ENCODE measurements at regions of chr7 and their contacts with region 1.

Region 1: GRCh38 chr7:99143853-99144672 is at the start of gene SMURF1:
- DNase-seq: peak in 1 of 2 donors; percentile 79
- H3K4me3 ChIP-seq: peak within 1 kb of the TSS; percentile 97 to 100
- H3K27ac ChIP-seq: peak within 1 kb of the TSS; percentile 99 to 100
- H3K4me1 ChIP-seq: peaks cover 3 to 11% of the 10 kb centered on the region in 2 donors
- H3K27me3 ChIP-seq: no peaks in the 10 kb centered on the region
- CTCF ChIP-seq: peak in 1 of 3 experiments; percentile 35
- total RNA-seq, gene SMURF1: 26.5 TPM

Region 2: GRCh38 chr7:99040104-99040958 is 103.7 kb before region 1 on chr7:
- intact Hi-C with region 1: loop called (anchors 1 kb)
- DNase-seq: peak; percentile 46 to 92
- H3K4me3 ChIP-seq: peak overlapping the region in 1 of 2 donors; percentile 25
- H3K27ac ChIP-seq: peak overlapping the region; percentile 79 to 87
- H3K4me1 ChIP-seq: peaks cover 3 to 31% of the 10 kb centered on the region in 2 donors
- H3K27me3 ChIP-seq: no peaks in the 10 kb centered on the region
- CTCF ChIP-seq: peak; percentile 68 to 85 (median 70)

Region 3: DNA sequence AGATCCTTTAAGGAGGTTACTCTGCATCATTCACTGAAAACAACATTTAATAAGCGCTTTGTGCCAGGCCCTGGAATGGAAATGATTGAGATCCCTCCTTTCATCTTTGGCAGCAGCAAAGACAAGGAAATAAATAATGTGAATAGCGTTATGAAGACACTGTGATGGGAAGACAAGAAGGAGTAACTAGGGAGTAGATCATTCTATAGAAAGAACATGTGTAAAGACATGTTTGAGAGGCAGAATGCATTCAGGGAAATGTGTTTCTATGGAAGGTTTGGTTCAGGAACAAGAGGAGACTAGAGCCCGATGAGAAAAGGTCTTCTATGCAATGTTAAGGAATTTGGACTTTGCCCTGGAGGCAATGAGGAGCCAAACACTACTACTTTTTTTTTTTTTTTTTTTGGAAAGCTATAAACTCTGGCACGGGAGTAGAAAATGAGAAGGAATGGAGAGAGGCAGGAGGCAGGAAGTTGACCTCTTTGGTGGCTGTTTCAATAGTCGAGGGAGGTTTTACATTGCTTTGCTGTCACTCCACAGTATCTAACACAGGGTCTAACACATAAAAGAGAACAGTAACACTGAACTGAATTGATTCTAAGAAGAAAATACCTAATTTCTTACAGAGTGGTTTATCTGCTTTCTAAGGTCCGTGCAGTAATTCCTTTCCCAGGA is 45.1 kb before region 1 on chr7:
- intact Hi-C with region 1: loop called (anchors 2 kb)
- DNase-seq: no peak
- H3K4me3 ChIP-seq: peak overlapping the region; percentile 10 to 32
- H3K27ac ChIP-seq: peak overlapping the region; percentile 79 to 80
- H3K4me1 ChIP-seq: peaks cover 12 to 45% of the 10 kb centered on the region in 2 donors
- H3K27me3 ChIP-seq: no peaks in the 10 kb centered on the region
- CTCF ChIP-seq: no peak

Region 4: DNA sequence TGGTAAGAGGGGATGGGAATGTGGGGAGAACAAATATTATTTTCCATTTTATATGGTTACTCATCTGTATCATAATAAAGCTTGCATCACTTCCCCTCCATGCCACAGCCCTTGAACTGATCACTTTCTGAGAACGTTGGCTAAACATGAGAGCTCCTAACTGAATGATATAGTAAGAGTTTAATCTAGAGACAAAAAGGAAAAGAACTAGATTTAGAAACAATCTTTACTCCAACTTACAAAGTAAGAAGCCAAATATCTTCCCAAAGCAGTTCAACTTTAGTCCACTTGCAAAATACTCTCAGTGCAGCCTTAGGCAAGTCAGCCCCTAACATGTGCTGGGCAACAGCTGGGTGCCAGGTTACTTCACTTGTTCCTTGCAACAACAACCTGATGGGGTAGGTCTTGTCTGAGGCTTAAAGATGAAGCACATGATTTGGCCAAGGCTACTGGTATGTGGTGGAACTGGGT is 20.5 kb before region 1 on chr7:
- intact Hi-C with region 1: loop called (anchors 2 kb)
- DNase-seq: peak in 1 of 2 donors; percentile 75
- H3K4me3 ChIP-seq: no peak overlapping the region
- H3K27ac ChIP-seq: peak overlapping the region; percentile 77 to 89
- H3K4me1 ChIP-seq: peaks cover 36 to 68% of the 10 kb centered on the region in 2 donors
- H3K27me3 ChIP-seq: no peaks in the 10 kb centered on the region
- CTCF ChIP-seq: no peak

Region 5: GRCh38 chr7:99374103-99375064 is 230.3 kb after region 1 on chr7 and contains the start of gene ARPC1B:
- intact Hi-C with region 1: loop called (anchors 2 kb)
- DNase-seq: peak; percentile 47 to 92
- H3K4me3 ChIP-seq: peak within 1 kb of the TSS; percentile 88 to 94
- H3K27ac ChIP-seq: peak within 1 kb of the TSS; percentile 87 to 97
- H3K4me1 ChIP-seq: peaks cover under 1 to 17% of the 10 kb centered on the region in 2 donors
- H3K27me3 ChIP-seq: no peaks in the 10 kb centered on the region
- CTCF ChIP-seq: no peak
- total RNA-seq, gene ARPC1B: 360 TPM